Caco-2 (cell line): ENCODE measurements at regions of chr7 and their contacts with region 1.

Region 1: DNA sequence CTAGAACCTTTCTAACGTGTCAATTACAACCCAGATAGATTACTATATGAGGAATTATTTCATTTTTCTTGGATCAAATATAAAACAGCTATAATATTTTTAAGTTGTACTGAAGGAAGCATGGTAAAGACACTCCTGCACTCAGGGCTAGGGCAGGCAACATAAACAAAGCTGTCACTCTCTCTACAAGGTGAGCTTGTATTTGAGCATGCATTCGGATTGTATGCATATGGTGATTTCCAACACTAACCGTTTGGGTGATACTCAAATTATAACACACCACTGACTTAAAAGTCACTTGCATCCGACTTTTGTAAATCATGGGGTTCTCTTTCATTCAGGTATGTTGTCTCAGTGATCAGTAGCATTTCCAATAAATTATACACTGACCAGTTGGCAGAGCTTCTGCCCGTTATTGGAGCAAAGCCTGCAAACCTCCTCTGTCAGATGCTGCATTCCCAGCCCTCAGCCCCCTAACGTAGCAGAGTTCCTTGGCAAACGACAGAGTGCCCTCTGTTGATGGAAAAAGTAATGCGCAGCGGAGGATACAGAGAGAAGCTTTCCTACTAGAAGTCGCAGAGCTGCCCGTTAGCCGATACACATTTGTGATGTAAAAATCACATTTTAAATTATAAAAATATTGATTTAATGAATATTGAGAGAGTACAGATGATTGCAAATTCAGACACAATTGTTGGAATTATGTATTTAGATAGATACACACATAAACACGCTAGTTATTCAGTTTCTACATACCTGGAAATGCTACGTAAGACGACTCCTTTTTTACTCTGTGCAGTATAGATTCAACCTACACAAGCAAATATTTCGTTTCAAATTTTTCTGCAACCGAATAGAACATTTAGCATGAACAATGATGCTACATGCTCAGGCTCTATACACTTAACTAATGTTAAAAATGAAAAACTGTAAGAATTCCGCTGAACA is 173.9 kb upstream of the SP4 start:
- DNase-seq: peak; percentile 72 to 79
- H3K4me3 ChIP-seq: no peak overlapping the region
- H3K4me3 Mint-ChIP-seq: peak overlapping the region; percentile 20
- H3K27ac Mint-ChIP-seq: no peak overlapping the region
- H3K4me1 ChIP-seq: peaks cover 12% of the 10 kb centered on the region; the same call in 1 of the 2 replicates
- H3K4me1 Mint-ChIP-seq: no peaks in the 10 kb centered on the region
- H3K27me3 ChIP-seq: no peaks in the 10 kb centered on the region
- H3K27me3 Mint-ChIP-seq: no peaks in the 10 kb centered on the region
- CTCF ChIP-seq: peak; percentile 63 to 79

Region 2: GRCh38 chr7:20529260-20529659 is 724.8 kb before region 1 on chr7:
- CTCF ChIA-PET with region 1: no interaction called
- POLR2A ChIA-PET with region 1: no interaction called
- intact Hi-C with region 1: no loop called
- DNase-seq: no peak
- H3K4me3 ChIP-seq: no peak overlapping the region
- H3K4me3 Mint-ChIP-seq: no peak overlapping the region
- H3K27ac Mint-ChIP-seq: no peak overlapping the region
- H3K4me1 ChIP-seq: no peaks in the 10 kb centered on the region
- H3K4me1 Mint-ChIP-seq: no peaks in the 10 kb centered on the region
- H3K27me3 ChIP-seq: no peaks in the 10 kb centered on the region
- H3K27me3 Mint-ChIP-seq: peaks cover 6% of the 10 kb centered on the region
- CTCF ChIP-seq: no peak

Region 3: DNA sequence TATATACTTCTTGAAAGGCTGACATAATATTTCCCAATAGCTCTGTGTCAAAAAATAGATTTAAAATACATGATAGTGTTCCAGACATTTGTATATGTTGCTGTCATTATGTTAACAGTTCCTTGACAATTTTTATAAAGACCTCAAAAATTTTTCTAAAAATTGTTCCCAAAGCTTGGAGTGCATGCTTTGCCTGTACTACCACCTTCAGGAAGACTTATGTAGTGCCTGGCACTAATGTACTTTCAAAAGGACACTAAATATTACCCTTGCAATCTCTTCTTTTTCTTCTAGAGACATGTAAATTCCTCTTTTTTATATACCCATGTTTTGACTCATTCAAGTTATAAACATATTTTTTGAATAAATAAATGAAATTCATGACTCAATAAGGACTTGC is 419.4 kb before region 1 on chr7:
- CTCF ChIA-PET with region 1: interaction called, 3 read pairs
- POLR2A ChIA-PET with region 1: no interaction called
- intact Hi-C with region 1: loop called (anchors 2 kb)
- DNase-seq: peak in 1 of 2 experiments; percentile 19
- H3K4me3 ChIP-seq: peak overlapping the region; percentile 29; the same call in 1 of the 2 replicates
- H3K4me3 Mint-ChIP-seq: peak overlapping the region; percentile 68
- H3K27ac Mint-ChIP-seq: no peak overlapping the region
- H3K4me1 ChIP-seq: no peaks in the 10 kb centered on the region
- H3K4me1 Mint-ChIP-seq: peaks cover 12% of the 10 kb centered on the region
- H3K27me3 ChIP-seq: no peaks in the 10 kb centered on the region
- H3K27me3 Mint-ChIP-seq: peaks cover 3% of the 10 kb centered on the region
- CTCF ChIP-seq: peak; percentile 50 to 60

Region 4: DNA sequence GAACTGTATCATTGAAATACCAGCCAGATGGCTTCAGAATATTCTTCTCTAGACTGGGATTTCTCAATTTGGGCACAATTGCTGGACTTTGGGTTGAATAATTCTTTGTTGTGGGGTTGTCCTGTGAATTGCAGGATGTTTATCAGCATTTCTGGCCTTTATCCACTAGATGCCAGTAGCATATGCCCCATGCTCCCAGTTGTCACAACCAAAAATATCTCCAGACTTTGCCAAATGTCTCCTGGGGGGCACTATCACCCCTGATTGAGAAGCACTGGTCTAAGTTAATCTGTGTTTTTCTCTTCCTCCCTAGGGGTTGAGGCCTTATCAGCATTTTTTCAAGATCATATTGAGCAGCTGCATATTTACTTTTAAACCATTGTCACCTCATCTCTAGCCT is 262.5 kb before region 1 on chr7:
- CTCF ChIA-PET with region 1: no interaction called
- POLR2A ChIA-PET with region 1: no interaction called
- intact Hi-C with region 1: loop called (anchors 1 kb)
- DNase-seq: no peak
- H3K4me3 ChIP-seq: no peak overlapping the region
- H3K4me3 Mint-ChIP-seq: no peak overlapping the region
- H3K27ac Mint-ChIP-seq: no peak overlapping the region
- H3K4me1 ChIP-seq: no peaks in the 10 kb centered on the region
- H3K4me1 Mint-ChIP-seq: no peaks in the 10 kb centered on the region
- H3K27me3 ChIP-seq: no peaks in the 10 kb centered on the region
- H3K27me3 Mint-ChIP-seq: no peaks in the 10 kb centered on the region
- CTCF ChIP-seq: peak in 1 of 2 experiments; percentile 24

Region 5: DNA sequence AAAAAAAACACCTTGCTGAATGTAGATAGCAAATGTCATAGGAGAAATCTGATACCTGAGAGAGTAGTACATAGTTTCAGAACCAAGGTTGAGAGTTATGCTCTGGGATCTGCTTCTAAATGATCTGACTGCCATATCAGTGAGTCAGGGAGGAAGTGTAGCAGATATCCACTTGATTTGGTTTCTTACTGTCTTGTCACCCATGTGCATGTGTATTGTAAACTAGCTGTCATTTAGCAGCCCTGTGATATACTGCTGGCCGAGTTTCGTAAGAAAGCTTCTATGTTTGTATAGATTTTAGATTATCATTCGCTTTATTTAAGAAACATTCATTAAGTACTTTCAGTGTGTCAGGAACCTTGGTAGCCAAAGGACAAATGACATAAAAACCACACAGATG is 215.9 kb after region 1 on chr7:
- CTCF ChIA-PET with region 1: no interaction called
- POLR2A ChIA-PET with region 1: no interaction called
- intact Hi-C with region 1: no loop called
- DNase-seq: no peak
- H3K4me3 ChIP-seq: no peak overlapping the region
- H3K4me3 Mint-ChIP-seq: no peak overlapping the region
- H3K27ac Mint-ChIP-seq: no peak overlapping the region
- H3K4me1 ChIP-seq: no peaks in the 10 kb centered on the region
- H3K4me1 Mint-ChIP-seq: no peaks in the 10 kb centered on the region
- H3K27me3 ChIP-seq: no peaks in the 10 kb centered on the region
- H3K27me3 Mint-ChIP-seq: no peaks in the 10 kb centered on the region
- CTCF ChIP-seq: no peak

Region 6: DNA sequence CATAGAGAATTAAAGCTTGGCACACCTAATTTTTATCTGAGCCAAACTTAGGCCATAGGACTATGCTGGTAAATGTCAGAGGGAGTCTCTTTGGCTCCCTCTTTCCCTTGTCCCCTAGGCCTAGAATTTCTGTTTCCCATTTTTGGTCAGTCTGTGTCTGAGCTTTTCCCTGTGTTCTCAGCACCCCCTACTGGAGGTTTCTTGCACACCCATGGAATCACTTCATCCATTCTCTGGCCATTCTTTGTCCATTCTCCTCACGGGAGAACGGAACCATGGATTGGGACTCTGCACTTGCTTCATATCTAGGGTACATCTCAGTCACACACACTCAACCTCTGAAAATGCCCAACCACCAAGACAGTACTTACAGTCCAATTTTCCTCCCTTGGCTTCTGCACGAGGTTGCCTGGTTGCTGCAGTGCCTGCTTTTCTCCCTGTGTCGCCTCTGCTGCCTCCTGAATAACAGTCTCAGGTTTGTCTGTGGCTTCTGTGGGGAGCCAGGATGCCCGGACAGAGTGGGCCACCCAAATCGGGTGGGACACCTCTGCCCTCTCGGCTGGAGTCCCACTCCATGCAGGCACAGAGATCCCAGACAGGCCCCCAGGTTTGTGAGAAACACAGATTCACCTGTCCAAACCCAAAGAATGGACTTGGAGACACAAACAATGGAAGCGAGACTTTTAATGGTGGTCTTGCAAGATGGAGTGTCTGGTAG is 253.8 kb after region 1 on chr7:
- CTCF ChIA-PET with region 1: no interaction called
- POLR2A ChIA-PET with region 1: no interaction called
- intact Hi-C with region 1: loop called (anchors 1 kb)
- DNase-seq: peak in 1 of 2 experiments; percentile 49
- H3K4me3 ChIP-seq: no peak overlapping the region
- H3K4me3 Mint-ChIP-seq: no peak overlapping the region
- H3K27ac Mint-ChIP-seq: no peak overlapping the region
- H3K4me1 ChIP-seq: peaks cover 17% of the 10 kb centered on the region; the same call in 1 of the 2 replicates
- H3K4me1 Mint-ChIP-seq: peaks cover 13% of the 10 kb centered on the region
- H3K27me3 ChIP-seq: no peaks in the 10 kb centered on the region
- H3K27me3 Mint-ChIP-seq: no peaks in the 10 kb centered on the region
- CTCF ChIP-seq: peak; percentile 53 to 54

Region 7: GRCh38 chr7:21690705-21691104 is 436.7 kb after region 1 on chr7:
- CTCF ChIA-PET with region 1: no interaction called
- POLR2A ChIA-PET with region 1: no interaction called
- intact Hi-C with region 1: loop called (anchors 2 kb)
- DNase-seq: no peak
- H3K4me3 ChIP-seq: no peak overlapping the region
- H3K4me3 Mint-ChIP-seq: no peak overlapping the region
- H3K27ac Mint-ChIP-seq: no peak overlapping the region
- H3K4me1 ChIP-seq: no peaks in the 10 kb centered on the region
- H3K4me1 Mint-ChIP-seq: no peaks in the 10 kb centered on the region
- H3K27me3 ChIP-seq: no peaks in the 10 kb centered on the region
- H3K27me3 Mint-ChIP-seq: no peaks in the 10 kb centered on the region
- CTCF ChIP-seq: peak in 1 of 2 experiments; percentile 19